ENCODE measurements at regions of chr17 and their contacts with region 1.

Region 1: DNA sequence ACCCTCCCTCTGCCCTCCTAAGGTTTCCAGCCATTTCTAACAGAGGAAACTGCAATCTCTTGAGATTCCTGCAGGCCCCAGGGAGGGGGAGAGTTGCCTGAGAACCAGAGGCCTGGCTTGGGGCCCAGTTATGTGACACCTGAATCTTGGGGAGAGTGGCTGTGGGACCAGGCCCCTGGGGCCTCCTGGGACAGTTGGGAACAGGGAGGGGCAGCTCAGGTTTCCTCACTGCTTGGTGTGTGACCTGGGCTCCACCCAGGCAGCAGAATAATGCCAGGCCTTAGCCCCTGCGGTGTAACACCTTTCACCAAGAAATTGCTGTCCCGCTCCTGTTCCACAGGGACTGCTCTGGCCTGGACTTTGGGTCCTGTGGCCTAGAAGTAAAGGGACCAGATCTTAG is 44.3 kb upstream of the CRHR1 start:
- DNase-seq: peak; percentile 83
- ATAC-seq: peak; percentile 59 to 92
- H3K4me3 ChIP-seq: no peak overlapping the region
- H3K27ac ChIP-seq: no peak overlapping the region
- H3K4me1 ChIP-seq: peaks cover 6% of the 10 kb centered on the region
- H3K27me3 ChIP-seq: peaks cover 14% of the 10 kb centered on the region
- CTCF ChIP-seq: no peak

Region 2: DNA sequence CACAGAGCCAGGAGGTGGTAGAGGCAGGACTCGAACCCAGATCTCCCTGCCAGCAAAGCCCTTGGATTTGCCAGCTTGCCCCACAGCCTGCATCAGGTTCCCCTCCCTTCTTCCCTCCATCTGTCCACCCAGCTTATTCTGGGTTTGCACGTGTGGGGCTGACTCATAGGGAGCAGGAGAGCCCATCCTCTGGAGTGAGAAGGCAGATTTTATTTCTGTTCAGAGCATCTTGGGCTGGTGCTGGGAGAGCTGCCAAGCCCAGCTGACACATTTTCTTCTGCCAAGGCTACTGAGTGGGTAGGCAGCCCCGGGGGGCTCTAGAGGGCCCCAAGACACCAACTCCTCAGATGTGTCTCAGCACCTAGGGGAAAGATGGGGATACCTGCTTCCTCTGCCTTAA is 62.0 kb before region 1 on chr17:
- intact Hi-C with region 1: loop called (anchors 10 kb)
- DNase-seq: peak; percentile 2
- ATAC-seq: no peak
- H3K4me3 ChIP-seq: no peak overlapping the region
- H3K27ac ChIP-seq: no peak overlapping the region
- H3K4me1 ChIP-seq: no peaks in the 10 kb centered on the region
- H3K27me3 ChIP-seq: no peaks in the 10 kb centered on the region
- CTCF ChIP-seq: no peak

Measured in lower lobe of right lung (tissue), 2 donors.